SK-N-SH (cell line): ENCODE measurements at regions of chr22 and their contacts with region 1.

Region 1: DNA sequence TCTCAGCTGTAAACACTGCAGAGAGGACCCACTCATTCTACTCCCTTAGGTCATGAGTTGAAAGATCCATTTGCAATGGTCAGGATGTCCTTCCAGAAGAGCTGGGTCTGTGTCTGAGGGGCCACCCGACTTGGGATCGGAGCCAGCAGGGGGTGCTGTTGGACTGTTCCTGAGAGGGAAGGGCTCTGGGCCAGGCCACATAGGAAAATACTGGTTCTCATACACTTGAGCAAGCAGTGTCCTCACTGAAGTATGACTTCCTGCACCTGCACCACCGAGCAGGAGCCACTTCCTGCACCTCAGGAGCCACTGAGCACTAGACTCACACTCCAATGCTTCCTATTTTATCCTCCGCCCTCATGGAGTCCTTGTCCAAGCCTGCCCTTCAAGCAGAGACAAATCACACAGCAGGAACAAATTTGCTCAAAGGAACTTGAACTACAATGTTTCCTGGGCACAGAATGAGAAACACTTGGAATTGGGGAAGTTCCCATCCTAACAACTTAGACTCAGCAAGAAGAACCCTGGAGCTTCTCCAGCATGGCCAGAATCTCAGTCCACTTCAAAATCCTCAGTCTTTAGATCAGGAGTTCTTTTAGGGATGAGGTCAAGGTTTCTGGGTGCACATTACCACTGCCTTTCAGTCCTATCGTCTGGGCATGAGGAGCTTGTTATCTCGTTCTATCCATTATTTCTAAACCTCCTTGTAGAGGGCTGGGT is 36.6 kb upstream of the VPREB1 start:
- DNase-seq: peak; percentile 77
- H3K4me3 ChIP-seq: no peak overlapping the region; a peak in 1 of 4 replicates
- H3K27ac ChIP-seq: no peak overlapping the region
- H3K4me1 ChIP-seq: peaks cover 0 to 6% of the 10 kb centered on the region in 2 experiments; a peak in 1 of 4 replicates
- H3K27me3 ChIP-seq: peaks cover 12% of the 10 kb centered on the region
- CTCF ChIP-seq: peak; percentile 77
- EP300 ChIP-seq: no peak
- RAD21 ChIP-seq: peak; percentile 79

Region 2: DNA sequence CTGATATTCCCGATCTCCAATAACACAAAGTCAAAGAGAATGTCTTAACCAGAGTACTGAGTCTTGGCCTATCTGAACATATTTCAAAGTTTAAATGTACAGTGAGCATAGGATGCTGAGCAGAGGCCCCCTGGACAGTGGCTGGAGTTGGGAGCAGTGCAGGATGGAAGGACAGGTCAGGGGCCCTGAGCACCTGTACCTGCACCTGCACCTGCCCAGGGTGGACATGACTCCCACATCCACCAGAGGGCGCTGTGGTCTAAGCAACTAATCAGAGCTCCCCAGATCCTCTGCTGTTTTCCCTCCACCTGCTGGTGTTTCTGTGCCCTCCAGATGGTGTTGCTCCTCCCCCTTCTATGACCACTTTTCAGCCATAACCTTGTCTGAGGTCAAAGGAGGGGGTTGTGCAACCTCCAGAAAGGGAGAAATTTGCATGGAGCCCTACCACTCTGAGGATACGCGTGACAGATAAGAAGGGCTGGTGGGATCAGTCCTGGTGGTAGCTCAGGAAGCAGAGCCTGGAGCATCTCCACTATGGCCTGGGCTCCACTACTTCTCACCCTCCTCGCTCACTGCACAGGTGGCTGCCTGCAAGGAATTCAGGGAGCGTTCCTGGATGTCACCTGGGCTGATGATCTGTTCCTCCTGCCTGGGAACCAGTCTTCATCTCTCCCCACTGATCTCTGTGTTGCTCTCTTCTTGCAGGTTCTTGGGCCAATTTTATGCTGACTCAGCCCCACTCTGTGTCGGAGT is 12.6 kb before region 1 on chr22:
- CTCF ChIA-PET with region 1: interaction called, 55 read pairs
- POLR2A ChIA-PET with region 1: no interaction called
- DNase-seq: peak; percentile 70
- H3K4me3 ChIP-seq: peak overlapping the region in 1 of 2 experiments; percentile 47; a peak in 1 of 4 replicates
- H3K27ac ChIP-seq: no peak overlapping the region
- H3K4me1 ChIP-seq: no peaks in the 10 kb centered on the region
- H3K27me3 ChIP-seq: peaks cover 27% of the 10 kb centered on the region; the same call in 1 of the 2 replicates
- CTCF ChIP-seq: peak; percentile 83
- EP300 ChIP-seq: no peak
- RAD21 ChIP-seq: peak; percentile 63